Cardiac septum (tissue), 1 donor: ENCODE measurements at regions of chr2 and their contacts with region 1.

Region 1: DNA sequence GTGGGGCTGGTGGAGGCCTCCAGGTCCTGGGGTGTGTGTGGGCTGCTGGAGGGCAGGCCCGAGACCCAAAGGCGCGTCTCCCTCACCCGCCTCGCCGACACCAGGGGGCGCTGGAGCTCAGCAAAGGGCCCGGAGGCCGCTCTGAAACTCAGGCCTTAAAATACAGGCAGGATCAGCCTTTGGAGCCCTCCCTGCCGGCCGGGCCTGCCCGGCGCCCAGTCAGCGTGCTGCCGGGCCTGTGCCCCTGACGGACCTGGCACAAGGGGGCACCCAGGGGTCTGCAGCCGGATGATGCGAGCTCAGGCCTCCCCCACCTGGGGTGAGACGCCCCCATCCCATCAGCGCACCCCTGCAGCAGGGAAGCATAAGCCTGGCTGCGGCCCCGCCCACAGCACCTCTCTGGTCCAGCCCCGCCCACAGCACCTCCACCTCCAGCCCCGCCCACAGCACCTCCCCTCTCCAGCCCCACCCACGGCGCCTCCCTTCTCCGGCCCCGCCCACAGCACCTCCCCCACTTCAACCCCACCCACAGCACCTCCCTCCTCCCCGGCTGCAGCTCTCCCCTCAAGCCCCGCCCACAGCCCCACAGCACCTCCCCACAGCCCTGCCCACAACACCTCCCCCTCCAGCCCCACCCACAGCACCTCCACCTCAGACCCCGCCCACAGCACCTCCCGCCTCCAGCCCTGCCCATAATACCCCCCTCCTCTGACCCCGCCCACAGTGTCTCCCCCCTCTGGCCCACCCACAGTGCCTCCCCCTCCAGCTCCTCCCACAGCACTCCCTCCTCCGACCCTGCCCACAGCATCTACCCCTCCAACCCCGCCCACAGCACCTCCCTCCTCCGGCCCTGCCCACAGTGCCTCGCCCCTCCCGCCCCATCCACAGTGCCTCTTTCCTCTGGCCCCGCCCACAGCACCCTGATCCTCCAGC is 92.8 kb upstream of the OTOS start:
- DNase-seq: peak; percentile 93

Region 2: GRCh38 chr2:240259201-240259923 is 26.1 kb after region 1 on chr2:
- intact Hi-C with region 1: loop called (anchors 1 kb)
- DNase-seq: peak; percentile 91

Region 3: DNA sequence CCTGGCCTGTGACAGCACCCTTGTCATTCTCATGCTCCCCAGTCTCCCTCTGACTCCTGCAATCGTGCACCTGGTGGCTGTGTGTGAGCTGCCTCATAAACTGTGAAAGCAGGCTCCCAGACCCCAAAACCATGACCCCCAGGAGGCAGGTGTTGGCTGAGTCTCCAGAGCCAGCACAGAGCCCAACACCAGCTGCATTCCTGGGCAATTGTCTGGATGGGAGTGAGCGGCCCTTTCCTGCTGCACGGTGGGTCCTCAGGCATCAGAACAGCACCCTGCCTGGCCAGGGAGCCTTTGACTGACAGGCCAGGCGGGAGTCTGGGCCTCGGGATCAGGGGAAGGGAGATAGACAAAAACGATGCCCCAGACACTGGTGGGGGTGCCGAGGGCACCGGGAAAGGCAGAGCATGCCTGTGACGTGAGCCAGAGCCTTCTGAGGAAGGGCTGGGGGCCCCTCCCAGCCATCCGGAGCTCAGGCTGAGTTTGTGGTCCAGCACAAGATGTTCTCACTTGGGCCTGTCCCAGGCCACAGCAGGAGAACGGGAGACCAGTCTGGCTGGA is 67.1 kb after region 1 on chr2:
- intact Hi-C with region 1: loop called (anchors 2 kb)
- DNase-seq: peak; percentile 61

Region 4: DNA sequence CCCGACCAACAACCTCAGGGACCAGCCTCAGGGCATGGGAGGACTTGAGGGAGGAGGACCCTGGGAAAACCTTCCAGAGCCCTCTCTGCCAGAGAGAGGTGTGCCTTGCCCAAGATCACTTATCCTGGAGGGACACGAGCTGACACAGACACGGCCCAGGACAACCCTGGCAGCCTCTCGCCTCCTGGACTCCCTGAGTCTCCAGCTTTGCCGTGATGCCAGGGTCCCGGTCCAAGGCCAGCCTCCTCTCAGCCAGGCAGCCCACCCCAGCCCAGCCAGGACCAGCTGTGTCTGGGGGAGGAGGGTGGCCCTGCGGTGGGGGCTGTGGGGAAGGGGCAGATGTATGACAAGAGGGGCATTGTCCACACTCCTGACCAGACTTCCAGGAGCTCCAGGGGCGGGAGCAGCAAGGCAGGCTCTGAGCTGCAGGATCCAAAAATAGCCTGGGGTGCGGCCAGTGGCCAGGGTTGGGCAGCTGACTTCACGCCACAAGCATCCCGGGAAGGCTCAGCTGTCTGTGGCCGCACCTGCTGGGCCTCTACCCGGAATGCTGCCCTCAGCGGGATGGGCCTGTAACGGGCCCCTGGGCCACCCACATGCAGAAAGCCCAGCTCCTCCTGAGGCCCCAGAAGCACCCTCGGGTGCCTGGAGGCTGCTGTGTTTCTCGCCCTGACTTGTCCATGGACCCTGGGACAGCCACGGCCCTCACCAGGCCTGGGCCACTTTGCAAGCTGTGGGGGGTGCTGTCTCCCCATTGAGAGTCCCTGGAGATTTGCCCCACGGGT is 136.8 kb after region 1 on chr2:
- intact Hi-C with region 1: loop called (anchors 2 kb)
- DNase-seq: peak; percentile 91

Region 5: DNA sequence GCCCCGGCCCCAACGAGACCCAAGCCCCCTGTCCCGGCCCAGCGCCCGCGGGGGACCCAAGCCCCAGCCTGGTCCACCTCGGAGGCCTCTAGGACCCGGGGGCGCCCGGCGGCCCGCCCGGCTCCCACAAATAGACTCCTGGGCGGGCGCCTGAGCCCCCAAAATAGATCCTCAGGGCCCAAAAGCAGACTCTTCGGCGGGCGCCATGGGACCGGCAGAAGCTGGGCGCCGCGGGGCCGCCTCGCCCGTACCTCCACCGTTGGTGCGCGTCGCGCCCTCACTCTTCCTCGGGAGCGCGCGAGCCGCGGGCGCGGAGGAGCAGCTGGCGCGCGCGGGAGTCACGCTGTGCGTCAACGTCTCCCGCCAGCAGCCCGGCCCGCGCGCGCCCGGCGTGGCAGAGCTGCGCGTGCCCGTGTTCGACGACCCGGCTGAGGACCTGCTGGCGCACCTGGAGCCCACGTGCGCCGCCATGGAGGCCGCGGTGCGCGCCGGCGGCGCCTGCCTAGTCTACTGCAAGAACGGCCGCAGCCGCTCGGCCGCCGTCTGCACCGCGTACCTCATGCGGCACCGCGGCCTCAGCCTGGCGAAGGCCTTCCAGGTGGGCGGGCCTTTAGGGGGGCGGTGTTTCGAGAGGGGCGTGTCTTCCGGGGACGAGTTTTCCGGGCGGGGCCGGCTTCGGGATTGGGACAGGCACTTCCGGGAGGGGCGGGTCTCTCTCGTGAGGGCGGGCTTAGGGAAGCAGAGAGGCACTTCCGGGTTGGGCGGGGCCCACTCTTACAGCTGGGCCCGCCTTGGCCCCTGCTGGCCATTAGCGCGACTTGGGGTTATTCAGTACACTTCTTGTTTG is 327.5 kb after region 1 on chr2:
- intact Hi-C with region 1: loop called (anchors 10 kb)
- DNase-seq: peak; percentile 100